ENCODE measurements at regions of chr6 and their contacts with region 1.

Region 1: DNA sequence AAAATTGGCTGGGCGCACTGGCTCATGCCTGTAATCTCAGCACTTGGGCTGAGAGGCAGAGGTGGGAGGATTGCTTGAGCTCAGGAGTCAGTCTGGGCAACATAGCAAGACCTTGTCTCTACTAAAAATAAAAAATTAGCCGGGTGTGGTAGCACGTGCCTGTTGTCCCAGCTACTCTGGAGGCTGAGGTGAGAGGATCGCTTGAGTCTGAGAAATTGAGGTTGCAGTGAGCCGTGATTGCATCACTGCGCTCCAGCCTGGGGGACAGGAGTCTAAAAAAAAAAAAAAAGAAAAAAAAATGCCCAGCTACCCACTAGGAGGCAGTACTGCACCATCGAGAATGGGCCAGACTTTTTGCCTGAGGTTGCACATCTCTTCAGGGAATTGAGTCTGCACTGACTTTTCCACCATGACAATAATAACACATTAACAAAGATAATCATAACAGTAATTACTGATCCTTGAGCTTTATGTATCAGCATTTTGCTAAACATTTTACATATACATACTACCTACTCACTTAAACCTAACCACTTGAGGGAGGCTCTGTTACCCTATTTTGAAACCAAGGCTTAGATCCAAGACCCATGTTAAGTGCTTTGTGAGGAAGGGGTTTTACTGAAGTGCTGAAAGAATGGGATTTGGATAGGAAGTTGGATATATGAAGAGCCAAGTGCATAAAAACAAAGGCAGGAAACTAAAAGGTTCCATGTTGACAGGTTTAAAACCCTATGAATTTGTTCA is 21.0 kb downstream of the SRSF3 start:
- DNase-seq: peak in 2 of 10 donors; percentile 54 to 76

Region 2: DNA sequence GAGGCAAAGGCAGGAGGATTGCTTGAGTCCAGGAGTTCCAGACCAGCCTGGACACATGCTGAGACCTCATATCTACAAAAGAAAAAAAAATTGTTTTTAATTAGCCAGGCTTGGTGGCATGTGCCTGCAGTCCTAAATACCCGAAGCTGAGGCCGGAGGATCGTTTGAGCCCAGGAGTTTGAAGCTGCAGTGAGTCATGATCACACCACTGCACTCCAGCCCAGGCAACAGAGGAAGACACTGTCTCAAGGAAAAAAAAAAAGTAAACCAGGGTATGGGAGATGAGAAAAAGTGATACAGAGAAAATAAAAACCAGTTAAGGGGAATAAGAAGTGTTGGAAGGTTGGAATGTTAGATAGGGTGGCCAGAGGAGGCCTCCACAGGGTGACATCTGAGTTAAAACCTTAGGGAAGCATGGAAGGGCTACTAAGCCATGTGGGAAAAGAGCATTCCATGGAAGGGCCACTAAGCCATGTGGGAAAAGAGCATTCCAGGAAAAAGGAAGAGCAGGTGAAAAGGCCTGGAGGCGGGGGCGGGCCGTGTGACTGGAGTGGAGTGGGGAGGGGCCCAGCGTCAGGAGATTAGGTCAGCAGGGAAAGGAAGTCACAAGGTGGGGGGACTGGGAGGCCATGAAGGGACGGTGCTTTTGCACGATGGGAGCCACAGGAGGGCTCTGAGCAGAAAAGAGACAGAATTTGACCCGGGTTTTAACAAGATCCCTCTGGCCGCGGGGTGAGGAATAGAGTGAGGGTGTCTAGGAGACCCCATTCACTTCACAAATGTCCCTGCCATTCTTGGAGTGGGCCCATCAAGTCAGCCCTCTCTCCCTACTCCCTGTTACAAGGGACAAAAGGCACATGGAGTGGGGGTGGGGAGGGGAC is 205.8 kb after region 1 on chr6:
- intact Hi-C with region 1: no loop called
- DNase-seq: peak in 1 of 10 donors; percentile 88

Region 3: DNA sequence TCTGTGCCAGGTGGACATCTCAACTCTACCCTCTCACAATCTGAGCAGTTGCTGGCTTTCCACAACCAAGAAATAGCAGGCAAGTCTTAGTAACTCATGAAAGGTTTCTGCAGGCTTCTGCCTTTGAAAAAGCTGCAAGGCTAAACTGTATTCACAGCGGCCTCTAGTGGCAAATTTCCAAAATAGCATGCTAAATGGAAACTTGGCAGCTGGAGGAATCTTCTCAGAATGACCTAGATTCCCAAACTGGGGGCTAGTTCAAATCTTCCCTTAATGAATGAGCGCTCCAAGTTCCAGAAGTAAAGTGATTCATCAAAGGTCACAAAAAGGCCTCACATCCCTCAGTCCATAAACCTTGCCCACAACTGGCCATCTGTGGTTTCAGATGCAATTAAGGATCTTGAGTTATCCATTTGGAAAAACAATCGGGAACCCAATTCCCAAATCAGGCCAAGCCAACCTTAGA is 236.0 kb after region 1 on chr6:
- intact Hi-C with region 1: loop called (anchors 10 kb)
- DNase-seq: peak in 2 of 10 donors; percentile 54 to 63

Region 4: GRCh38 chr6:36962874-36963273 is 347.7 kb after region 1 on chr6:
- intact Hi-C with region 1: no loop called
- DNase-seq: peak; percentile 47 to 96 (median 69)